Activated CD4-positive, alpha-beta T cell treated with anti-CD3 and anti-CD28 coated beads for 36 hours (primary cell): ENCODE measurements at regions of chr10 and their contacts with region 1.

Region 1: GRCh38 chr10:119207367-119207668 is at the start of gene GRK5:
- DNase-seq: peak; percentile 97
- ATAC-seq: peak; percentile 88
- H3K4me3 Mint-ChIP-seq: peak within 1 kb of the TSS; percentile 92
- H3K27ac Mint-ChIP-seq: peak within 1 kb of the TSS; percentile 93
- H3K4me1 Mint-ChIP-seq: peaks cover 38% of the 10 kb centered on the region
- H3K27me3 Mint-ChIP-seq: no peaks in the 10 kb centered on the region
- total RNA-seq, gene GRK5: 21.2 to 24.8 TPM

Region 2: DNA sequence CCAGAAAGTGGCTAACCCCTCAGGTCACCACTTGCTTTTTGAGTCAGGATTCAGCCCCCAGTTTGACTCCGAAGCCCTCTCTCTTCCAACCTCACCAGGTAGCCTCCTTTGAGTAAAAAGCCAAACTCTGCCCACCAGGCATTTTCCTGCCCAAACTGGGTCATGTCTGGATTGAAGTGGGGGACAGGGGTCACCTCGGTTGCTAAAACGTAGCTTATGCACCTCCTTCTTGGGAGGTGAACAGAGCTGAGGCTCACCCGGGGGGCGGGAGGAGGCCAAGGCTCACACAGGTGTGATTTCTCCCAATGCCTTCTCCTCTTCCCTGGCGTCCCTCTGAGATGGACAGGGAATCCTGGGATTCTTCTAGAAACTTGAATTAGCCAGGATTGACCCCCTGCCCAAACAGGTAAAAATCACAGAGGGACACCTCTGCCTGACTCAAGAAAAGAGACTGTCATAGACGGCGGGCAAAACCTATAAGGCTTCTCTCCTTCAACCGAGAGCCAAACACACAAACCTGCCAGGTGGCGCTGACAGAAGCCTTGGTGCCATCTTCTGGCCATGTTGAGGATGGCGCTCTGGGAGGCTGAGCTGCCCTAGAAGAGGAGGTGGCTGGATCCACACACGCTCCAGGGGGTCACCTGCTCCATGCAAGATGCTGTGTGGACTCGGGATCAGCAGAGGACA is 663.5 kb before region 1 on chr10:
- CTCF ChIA-PET with region 1: no interaction called
- POLR2A ChIA-PET with region 1: no interaction called
- intact Hi-C with region 1: no loop called
- DNase-seq: peak; percentile 70
- ATAC-seq: peak; percentile 73
- H3K4me3 Mint-ChIP-seq: no peak overlapping the region
- H3K27ac Mint-ChIP-seq: no peak overlapping the region
- H3K4me1 Mint-ChIP-seq: no peaks in the 10 kb centered on the region
- H3K27me3 Mint-ChIP-seq: peaks cover 28% of the 10 kb centered on the region

Region 3: DNA sequence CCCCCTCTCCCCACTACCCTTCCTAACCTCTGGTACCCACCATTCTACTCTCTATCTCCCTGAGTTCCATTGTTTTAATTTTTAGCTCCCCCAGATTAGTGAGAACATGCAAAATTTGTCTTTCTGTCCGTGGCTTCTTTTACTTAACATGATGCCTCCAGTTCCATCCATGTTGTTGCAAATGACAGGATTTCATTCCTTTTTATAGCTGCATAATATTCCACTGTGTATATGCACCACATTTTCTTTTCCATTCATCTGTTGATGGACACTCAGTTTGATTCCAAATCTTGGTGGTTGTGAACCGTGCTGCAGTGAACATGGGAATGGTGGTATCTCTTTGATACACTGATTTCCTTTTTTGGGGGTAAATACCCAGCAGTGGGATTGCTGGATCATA is 81.4 kb before region 1 on chr10:
- CTCF ChIA-PET with region 1: no interaction called
- POLR2A ChIA-PET with region 1: no interaction called
- intact Hi-C with region 1: no loop called
- DNase-seq: no peak
- ATAC-seq: no peak
- H3K4me3 Mint-ChIP-seq: no peak overlapping the region
- H3K27ac Mint-ChIP-seq: no peak overlapping the region
- H3K4me1 Mint-ChIP-seq: peaks cover 10% of the 10 kb centered on the region
- H3K27me3 Mint-ChIP-seq: no peaks in the 10 kb centered on the region

Region 4: DNA sequence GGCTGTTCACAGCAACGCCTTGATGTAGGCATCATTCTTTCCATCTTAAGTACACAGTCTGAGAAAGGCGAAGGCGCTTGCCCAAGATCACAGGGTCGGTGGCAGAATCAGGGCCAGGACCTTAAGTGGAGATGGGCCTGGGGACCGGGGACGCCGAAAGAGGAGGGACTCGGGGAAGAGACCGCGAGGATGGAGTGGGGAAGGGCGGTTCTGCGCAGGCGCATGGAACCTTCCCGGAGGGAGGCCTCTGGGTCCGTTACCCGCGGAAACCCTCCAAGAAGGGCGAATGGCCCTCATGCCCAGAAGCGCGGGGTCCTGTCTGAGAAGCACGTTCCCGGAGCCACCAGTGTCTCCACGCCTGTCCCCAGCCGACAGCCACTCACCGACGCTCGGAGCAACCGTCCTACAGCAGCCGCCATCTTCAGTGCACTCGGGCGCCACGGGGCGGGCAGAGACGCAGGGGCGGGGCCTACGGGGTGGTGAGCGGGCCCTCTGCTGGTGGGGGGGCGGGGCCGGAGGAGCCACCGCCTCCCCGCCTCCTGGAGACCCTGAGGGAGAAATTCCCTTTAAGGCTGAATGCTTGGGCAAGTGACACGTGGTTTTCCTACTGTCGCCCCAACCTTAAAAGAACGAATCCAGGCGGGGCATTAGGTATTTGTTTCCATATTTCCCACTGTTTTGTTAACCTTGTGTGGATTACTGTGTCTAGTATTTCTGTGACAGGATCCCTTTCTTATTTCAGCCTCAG is 28.8 kb before region 1 on chr10 and contains the start of gene PRDX3:
- CTCF ChIA-PET with region 1: interaction called, 10 read pairs
- POLR2A ChIA-PET with region 1: no interaction called
- intact Hi-C with region 1: loop called (anchors 1 to 2 kb)
- DNase-seq: peak; percentile 98
- ATAC-seq: peak; percentile 95
- H3K4me3 Mint-ChIP-seq: peak within 1 kb of the TSS; percentile 88
- H3K27ac Mint-ChIP-seq: peak within 1 kb of the TSS; percentile 95
- H3K4me1 Mint-ChIP-seq: peaks cover 36% of the 10 kb centered on the region
- H3K27me3 Mint-ChIP-seq: no peaks in the 10 kb centered on the region
- total RNA-seq, gene PRDX3: 160 to 217 TPM

Region 5: DNA sequence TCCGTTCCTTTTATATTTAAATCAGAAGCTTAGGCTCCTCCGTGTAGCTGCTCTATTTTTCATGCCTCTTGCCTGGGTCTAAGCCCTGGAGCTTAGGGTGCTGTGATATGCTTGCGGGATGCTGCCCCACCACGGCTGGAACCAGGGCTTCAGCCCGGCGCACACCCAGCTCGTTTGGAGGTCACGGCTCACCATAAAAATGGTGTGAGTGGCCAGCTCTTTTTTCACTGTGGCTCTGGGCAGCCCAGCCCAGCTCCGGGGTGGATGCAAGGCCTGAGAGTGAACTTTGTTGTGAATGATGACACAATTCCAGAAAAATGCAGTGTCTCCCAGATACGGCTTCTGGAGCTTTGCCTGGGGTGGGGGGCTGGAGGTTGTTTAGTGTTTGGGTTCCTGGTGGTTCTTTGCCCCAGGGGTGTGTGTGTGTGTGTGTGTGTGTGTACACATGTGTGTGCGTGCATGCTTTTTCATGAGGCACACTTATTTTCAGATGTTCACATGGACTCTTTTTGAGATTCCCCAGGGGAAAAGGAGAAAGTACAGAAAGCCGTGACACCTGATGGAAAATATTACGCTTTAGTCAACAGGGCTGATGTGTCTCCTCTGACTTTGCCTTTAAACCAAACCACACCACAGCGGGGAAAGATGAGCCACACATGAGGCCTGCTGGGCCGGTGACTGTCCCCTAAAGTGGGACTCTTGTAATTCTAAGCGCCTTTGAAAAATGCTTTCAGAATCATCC is 46.3 kb after region 1 on chr10:
- CTCF ChIA-PET with region 1: interaction called, 8 read pairs
- POLR2A ChIA-PET with region 1: no interaction called
- intact Hi-C with region 1: loop called in 1 of 2 experiments (anchors 2 kb)
- DNase-seq: peak; percentile 81
- ATAC-seq: peak; percentile 82
- H3K4me3 Mint-ChIP-seq: no peak overlapping the region
- H3K27ac Mint-ChIP-seq: peak overlapping the region; percentile 88
- H3K4me1 Mint-ChIP-seq: peaks cover 55% of the 10 kb centered on the region
- H3K27me3 Mint-ChIP-seq: no peaks in the 10 kb centered on the region

Region 6: GRCh38 chr10:119416855-119417254 is 209.5 kb after region 1 on chr10:
- CTCF ChIA-PET with region 1: interaction called, 18 read pairs
- POLR2A ChIA-PET with region 1: no interaction called
- intact Hi-C with region 1: loop called (anchors 1 kb)
- DNase-seq: peak; percentile 86
- ATAC-seq: peak; percentile 93
- H3K4me3 Mint-ChIP-seq: no peak overlapping the region
- H3K27ac Mint-ChIP-seq: no peak overlapping the region
- H3K4me1 Mint-ChIP-seq: no peaks in the 10 kb centered on the region
- H3K27me3 Mint-ChIP-seq: no peaks in the 10 kb centered on the region

Region 7: GRCh38 chr10:119502209-119502608 is 294.9 kb after region 1 on chr10:
- CTCF ChIA-PET with region 1: interaction called, 4 read pairs
- POLR2A ChIA-PET with region 1: no interaction called
- intact Hi-C with region 1: loop called in 1 of 2 experiments (anchors 5 kb)
- DNase-seq: peak; percentile 87
- ATAC-seq: peak; percentile 78
- H3K4me3 Mint-ChIP-seq: peak overlapping the region; percentile 56
- H3K27ac Mint-ChIP-seq: peak overlapping the region; percentile 98
- H3K4me1 Mint-ChIP-seq: peaks cover 96% of the 10 kb centered on the region
- H3K27me3 Mint-ChIP-seq: no peaks in the 10 kb centered on the region

Region 8: GRCh38 chr10:119725828-119726675 is 518.7 kb after region 1 on chr10 and contains the start of gene INPP5F:
- CTCF ChIA-PET with region 1: no interaction called
- POLR2A ChIA-PET with region 1: no interaction called
- intact Hi-C with region 1: loop called in 1 of 2 experiments (anchors 1 kb)
- DNase-seq: peak; percentile 100
- ATAC-seq: peak; percentile 95
- H3K4me3 Mint-ChIP-seq: peak within 1 kb of the TSS; percentile 86
- H3K27ac Mint-ChIP-seq: peak within 1 kb of the TSS; percentile 73
- H3K4me1 Mint-ChIP-seq: peaks cover 47% of the 10 kb centered on the region
- H3K27me3 Mint-ChIP-seq: no peaks in the 10 kb centered on the region
- total RNA-seq, gene INPP5F: 10.9 to 12.6 TPM